ENCODE measurements at regions of chr1 and their contacts with region 1.

Region 1: DNA sequence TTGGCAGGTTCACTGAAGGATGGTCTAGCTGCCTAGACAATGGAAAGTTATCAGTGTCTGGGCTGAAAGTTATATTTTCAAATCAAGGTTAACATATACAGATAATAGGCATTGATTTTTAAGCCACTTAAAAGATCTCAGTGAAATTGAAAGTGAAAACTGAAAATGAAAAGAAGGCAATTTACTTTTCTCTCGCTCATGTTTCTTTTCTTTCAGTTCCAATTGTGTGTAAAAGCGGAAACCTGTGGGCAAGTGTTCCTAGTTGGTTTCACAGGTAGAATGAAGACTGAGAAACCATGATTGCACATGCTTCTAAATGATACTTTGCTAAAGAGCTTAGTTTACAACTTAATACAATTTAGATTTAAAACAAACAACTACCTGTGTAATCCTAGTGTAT is 383.7 kb downstream of the ZP4 start:
- DNase-seq: peak in 1 of 35 experiments; percentile 16
- ATAC-seq: no peak
- H3K4me3 ChIP-seq: no peak overlapping the region
- H3K4me3 Mint-ChIP-seq: peak overlapping the region in 2 of 3 donors; percentile 37 to 44
- H3K27ac ChIP-seq: no peak overlapping the region
- H3K27ac Mint-ChIP-seq: peak overlapping the region; percentile 32 to 56
- H3K4me1 ChIP-seq: peaks cover 0 to 4% of the 10 kb centered on the region in 2 experiments
- H3K4me1 Mint-ChIP-seq: peaks cover 0 to 10% (median 9%) of the 10 kb centered on the region in 3 donors
- H3K27me3 ChIP-seq: no peaks in the 10 kb centered on the region
- H3K27me3 Mint-ChIP-seq: peaks cover 0 to 2% of the 10 kb centered on the region in 2 donors

Region 2: DNA sequence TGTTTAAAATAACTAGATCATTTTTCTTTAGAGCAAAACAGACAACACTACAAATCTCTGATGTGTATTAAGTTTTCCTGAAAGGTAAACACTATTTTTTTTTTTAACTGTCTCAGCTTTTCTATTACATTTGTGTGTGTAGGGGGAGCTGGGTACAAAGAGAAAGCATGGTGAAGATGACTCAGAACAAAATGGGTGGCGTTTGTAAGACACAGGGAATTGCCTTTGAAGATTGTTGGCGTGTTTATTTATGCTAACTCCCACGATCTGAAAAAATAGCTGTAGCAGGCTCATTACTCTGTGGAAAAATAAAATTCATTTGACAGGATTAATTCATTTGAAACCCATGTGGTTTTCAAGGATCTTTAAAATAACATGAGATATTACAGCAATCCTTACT is 179.9 kb before region 1 on chr1:
- CTCF ChIA-PET with region 1: no interaction called
- POLR2A ChIA-PET with region 1: no interaction called
- DNase-seq: no peak
- ATAC-seq: no peak
- H3K4me3 ChIP-seq: no peak overlapping the region
- H3K4me3 Mint-ChIP-seq: no peak overlapping the region
- H3K27ac ChIP-seq: no peak overlapping the region
- H3K27ac Mint-ChIP-seq: no peak overlapping the region
- H3K4me1 ChIP-seq: no peaks in the 10 kb centered on the region
- H3K4me1 Mint-ChIP-seq: no peaks in the 10 kb centered on the region
- H3K27me3 ChIP-seq: no peaks in the 10 kb centered on the region
- H3K27me3 Mint-ChIP-seq: no peaks in the 10 kb centered on the region

Region 3: DNA sequence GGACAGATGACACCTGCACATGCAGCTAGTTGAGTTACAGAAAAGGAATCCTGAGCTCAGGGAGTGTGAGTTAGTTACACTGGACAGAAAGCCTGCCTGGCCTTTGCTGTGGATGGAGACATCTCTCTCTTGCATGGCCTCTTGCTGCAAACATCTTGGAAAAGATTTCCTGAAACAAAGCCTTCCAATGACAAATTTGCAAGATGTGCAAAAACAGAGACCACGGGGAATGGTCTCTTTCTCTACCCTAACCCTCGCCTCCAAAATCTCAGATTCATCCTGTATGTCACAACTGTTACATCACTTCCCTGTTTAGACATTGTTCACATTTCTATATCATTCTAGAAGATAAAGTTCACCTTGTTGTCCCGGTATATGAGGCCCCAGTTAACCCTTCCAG is 49.4 kb before region 1 on chr1:
- CTCF ChIA-PET with region 1: no interaction called
- POLR2A ChIA-PET with region 1: no interaction called
- DNase-seq: no peak
- ATAC-seq: no peak
- H3K4me3 ChIP-seq: no peak overlapping the region
- H3K4me3 Mint-ChIP-seq: no peak overlapping the region
- H3K27ac ChIP-seq: no peak overlapping the region
- H3K27ac Mint-ChIP-seq: no peak overlapping the region
- H3K4me1 ChIP-seq: no peaks in the 10 kb centered on the region
- H3K4me1 Mint-ChIP-seq: no peaks in the 10 kb centered on the region
- H3K27me3 ChIP-seq: no peaks in the 10 kb centered on the region
- H3K27me3 Mint-ChIP-seq: peaks cover 0 to 4% of the 10 kb centered on the region in 2 donors

Region 4: DNA sequence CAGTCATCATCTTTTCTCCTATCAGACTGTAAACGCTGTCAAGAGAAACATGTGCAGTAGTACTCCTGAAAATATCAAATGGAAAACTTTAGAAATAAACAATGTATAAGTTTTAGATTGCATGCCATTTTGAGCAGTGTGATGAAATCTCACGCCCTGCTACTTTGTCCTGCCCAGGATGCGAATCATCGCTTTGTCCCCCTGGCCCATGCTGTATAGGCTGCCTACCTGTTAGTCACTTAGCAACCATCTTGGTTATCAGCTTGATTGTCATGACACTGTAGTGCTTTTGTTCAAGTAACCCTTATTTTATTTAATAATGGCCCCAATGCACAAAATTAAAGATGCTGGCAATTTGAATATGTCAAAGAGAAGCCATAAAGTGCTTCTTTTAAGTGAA is 20.8 kb after region 1 on chr1:
- CTCF ChIA-PET with region 1: interaction called in 1 of 2 experiments, 12 read pairs
- POLR2A ChIA-PET with region 1: no interaction called
- DNase-seq: no peak
- ATAC-seq: no peak
- H3K4me3 ChIP-seq: no peak overlapping the region
- H3K4me3 Mint-ChIP-seq: no peak overlapping the region
- H3K27ac ChIP-seq: no peak overlapping the region
- H3K27ac Mint-ChIP-seq: no peak overlapping the region
- H3K4me1 ChIP-seq: no peaks in the 10 kb centered on the region
- H3K4me1 Mint-ChIP-seq: no peaks in the 10 kb centered on the region
- H3K27me3 ChIP-seq: no peaks in the 10 kb centered on the region
- H3K27me3 Mint-ChIP-seq: no peaks in the 10 kb centered on the region

Region 5: DNA sequence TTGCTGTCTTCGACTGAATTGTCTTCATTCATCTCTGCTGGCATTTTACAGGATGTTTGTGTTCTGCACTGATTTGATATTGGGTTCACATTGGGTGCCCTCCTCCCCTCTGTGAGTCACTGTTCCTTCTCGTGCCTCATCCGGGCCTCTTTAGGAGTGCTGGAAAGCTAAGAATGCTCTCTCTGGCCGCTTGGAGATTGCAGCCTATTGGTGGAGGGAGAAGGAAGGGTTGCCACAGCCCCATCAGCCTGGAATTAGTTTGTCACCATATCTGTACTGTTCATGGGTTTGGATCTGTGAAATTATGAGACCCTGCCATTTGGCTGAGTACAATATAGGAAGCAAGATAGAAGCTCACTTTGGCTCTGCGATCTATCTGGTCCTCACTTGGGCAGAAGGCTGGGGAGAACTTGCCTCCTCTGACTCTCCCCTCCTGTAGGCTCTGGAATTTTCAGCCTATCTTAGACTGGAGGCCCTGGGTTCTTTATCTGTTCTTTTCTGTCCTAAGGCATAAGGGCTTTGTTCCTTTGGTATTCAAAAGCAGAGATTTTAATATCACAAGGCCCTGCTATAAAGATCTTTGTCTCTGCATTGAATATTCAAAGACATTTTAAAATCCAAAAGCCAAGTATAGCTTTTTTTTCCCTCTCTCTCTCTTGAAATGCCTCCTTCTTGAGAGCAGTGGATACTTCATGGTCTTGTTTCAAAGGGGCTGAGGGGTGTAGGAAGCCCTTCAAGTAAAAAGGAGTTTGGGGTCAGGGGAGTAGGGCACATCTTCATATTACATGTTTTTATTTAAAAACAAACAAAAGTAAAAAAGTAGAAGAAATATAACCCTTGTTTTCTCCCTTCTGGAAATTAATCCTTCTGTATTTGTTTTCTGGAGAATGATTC is 35.8 kb after region 1 on chr1:
- CTCF ChIA-PET with region 1: interaction called in 1 of 2 experiments, 8 read pairs
- POLR2A ChIA-PET with region 1: interaction called in 1 of 2 experiments, 11 read pairs
- DNase-seq: no peak
- ATAC-seq: no peak
- H3K4me3 ChIP-seq: no peak overlapping the region
- H3K4me3 Mint-ChIP-seq: no peak overlapping the region
- H3K27ac ChIP-seq: no peak overlapping the region
- H3K27ac Mint-ChIP-seq: no peak overlapping the region
- H3K4me1 ChIP-seq: no peaks in the 10 kb centered on the region
- H3K4me1 Mint-ChIP-seq: no peaks in the 10 kb centered on the region
- H3K27me3 ChIP-seq: no peaks in the 10 kb centered on the region
- H3K27me3 Mint-ChIP-seq: no peaks in the 10 kb centered on the region

Measured in T-cell (primary cell).